ENCODE measurements at regions of chr10 and their contacts with region 1.

Region 1: GRCh38 chr10:112314822-112315474 is 31.7 kb downstream of the TECTB start:
- DNase-seq: peak; percentile 91
- H3K4me3 Mint-ChIP-seq: no peak overlapping the region
- H3K27ac Mint-ChIP-seq: no peak overlapping the region
- H3K4me1 Mint-ChIP-seq: no peaks in the 10 kb centered on the region
- H3K27me3 Mint-ChIP-seq: peaks cover 31% of the 10 kb centered on the region

Region 2: DNA sequence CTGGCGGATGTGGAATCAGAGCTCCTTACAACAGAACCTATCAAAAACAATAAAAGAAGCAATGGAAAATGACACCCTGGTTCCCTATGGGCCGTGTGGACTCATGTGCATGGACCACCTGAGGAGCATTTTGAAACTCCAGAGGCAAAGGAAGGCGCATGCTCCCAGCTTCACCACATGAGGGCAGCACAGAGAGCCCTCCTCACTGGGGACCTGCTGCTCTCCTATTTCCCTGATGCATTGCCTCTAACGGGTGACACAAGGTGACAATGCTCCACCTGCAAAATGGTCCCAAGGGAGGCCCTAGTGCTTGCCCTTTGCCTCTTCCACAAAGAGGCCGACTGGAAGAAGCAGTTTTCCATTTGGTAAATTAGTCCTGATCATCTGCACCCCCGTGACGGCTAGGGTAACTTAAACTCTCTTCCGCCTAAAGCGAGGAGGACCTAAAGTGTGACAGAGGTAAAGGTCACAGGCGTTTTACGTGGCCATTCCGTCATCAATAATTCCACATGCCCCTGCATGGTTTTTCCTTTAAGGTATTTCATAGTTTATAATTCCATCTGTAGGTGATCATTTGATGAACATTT is 199.1 kb before region 1 on chr10:
- intact Hi-C with region 1: loop called (anchors 1 kb)
- DNase-seq: peak; percentile 81
- H3K4me3 Mint-ChIP-seq: no peak overlapping the region
- H3K27ac Mint-ChIP-seq: no peak overlapping the region
- H3K4me1 Mint-ChIP-seq: no peaks in the 10 kb centered on the region
- H3K27me3 Mint-ChIP-seq: no peaks in the 10 kb centered on the region

Region 3: DNA sequence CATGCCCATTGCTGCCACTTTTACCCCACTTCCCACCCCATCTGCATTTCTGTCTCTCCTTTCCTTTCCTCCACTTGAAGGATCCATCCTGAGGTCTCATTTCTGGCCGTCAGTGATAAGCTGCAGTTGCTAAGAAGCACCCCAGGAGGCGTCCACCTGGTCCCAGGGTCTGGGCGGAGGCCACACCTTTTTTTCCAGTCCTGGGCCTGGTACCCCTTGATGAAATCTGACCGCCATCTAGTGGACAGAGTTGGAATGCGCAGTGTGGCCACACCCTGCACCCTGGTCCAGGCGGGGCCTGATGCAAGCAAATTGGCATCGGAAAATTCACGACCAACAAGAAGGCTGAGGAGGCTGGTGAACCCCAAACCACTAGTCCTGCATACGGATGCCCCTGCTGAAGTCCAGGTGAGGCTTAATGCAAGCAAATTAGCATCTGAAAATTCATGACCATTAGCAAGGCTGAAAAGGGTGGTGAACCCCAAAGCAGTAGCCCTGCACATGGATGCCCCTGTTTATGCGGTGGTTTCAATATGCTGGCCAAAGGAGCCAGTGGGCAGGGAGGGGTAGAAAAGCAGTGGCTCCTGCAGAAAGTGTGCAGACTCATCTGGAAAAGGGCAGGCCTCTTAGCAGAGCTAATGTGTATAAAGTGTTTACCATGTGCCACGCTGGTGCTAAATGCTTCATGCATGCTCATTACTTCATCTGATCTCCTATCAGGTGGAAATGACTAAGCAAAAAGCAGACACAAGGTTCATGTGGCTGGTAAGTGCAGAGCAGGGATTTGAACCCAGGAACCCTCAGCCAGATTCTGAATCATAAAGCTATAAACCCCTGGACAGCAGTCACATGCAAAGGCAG is 174.6 kb before region 1 on chr10:
- intact Hi-C with region 1: loop called (anchors 1 kb)
- DNase-seq: peak; percentile 92
- H3K4me3 Mint-ChIP-seq: no peak overlapping the region
- H3K27ac Mint-ChIP-seq: no peak overlapping the region
- H3K4me1 Mint-ChIP-seq: peaks cover 3% of the 10 kb centered on the region
- H3K27me3 Mint-ChIP-seq: peaks cover 4% of the 10 kb centered on the region

Region 4: DNA sequence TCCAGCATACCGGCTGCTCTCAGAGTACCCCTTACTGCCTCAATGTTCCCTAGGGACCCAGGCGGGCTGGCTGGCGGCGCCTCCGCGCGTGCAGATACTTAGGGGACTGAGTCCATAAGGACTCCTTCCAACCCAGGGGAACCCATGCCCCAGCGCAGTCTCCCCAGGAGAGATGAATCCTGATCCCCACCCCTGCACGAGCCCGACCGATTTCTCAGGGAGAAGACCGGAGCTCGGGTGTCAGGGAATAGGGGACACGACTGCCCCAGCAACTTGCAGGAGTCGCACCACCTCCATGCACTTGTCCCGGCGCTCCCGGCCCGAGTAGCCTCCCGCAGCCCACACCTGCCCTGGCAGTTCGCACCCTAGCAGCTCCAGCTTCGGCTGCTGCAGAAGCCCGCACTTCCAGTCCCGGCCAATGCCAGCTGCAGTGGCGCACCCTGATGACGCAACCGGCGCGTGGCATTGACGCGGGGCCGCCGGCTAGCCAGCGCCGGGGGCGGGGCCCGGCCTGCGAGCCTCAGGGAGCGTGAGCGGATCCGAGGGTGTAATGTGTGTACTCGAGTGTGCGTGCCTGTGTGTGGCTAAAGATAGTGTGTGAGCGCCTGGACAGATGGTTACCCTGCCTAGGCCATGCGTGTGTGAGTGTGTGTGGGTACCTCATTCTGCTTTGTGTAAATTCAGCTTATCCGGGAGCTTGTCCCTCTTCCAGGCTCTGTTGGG is 131.5 kb before region 1 on chr10 and contains the start of gene GPAM:
- intact Hi-C with region 1: loop called (anchors 5 kb)
- DNase-seq: peak; percentile 100
- H3K4me3 Mint-ChIP-seq: peak within 1 kb of the TSS; percentile 88
- H3K27ac Mint-ChIP-seq: peak within 1 kb of the TSS; percentile 88
- H3K4me1 Mint-ChIP-seq: peaks cover 26% of the 10 kb centered on the region
- H3K27me3 Mint-ChIP-seq: peaks cover 11% of the 10 kb centered on the region
- total RNA-seq, gene GPAM: 8.6 and 9.8 TPM in 2 replicates

Region 5: GRCh38 chr10:112203328-112204076 is 111.4 kb before region 1 on chr10:
- intact Hi-C with region 1: no loop called
- DNase-seq: no peak
- H3K4me3 Mint-ChIP-seq: no peak overlapping the region
- H3K27ac Mint-ChIP-seq: no peak overlapping the region
- H3K4me1 Mint-ChIP-seq: peaks cover 3% of the 10 kb centered on the region
- H3K27me3 Mint-ChIP-seq: peaks cover 5% of the 10 kb centered on the region

Region 6: GRCh38 chr10:112434988-112435619 is 120.2 kb after region 1 on chr10:
- intact Hi-C with region 1: loop called (anchors 2 kb)
- DNase-seq: no peak
- H3K4me3 Mint-ChIP-seq: no peak overlapping the region
- H3K27ac Mint-ChIP-seq: no peak overlapping the region
- H3K4me1 Mint-ChIP-seq: no peaks in the 10 kb centered on the region
- H3K27me3 Mint-ChIP-seq: no peaks in the 10 kb centered on the region

Region 7: DNA sequence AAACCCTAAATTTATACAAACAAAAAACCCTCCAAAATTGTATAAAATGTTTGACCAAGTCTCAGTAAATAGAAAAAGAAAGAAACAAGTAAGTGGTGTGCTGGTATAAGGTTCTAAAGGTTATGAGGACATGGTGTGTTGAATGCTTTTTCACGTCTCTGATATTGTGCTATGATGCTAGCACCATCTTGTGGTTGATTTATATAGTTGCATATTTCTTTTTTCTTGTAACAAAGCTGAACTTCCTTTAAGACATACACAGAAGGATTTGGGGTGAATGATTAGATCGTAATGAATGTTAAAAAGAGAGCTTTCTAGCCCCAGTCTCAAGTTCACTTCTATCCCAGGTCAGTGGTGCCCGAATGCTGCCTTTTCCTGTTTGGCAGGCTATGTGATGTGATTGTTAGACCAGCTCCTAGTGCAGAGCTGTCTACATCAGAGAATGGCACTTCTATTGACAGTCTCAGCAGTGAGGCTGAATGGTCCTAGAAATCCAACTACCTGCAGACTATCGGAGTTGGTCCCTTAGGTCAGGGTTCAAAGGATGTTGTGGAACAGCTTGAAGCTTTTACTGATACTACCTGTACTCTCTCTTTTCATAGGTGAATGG is 157.0 kb after region 1 on chr10:
- intact Hi-C with region 1: loop called (anchors 2 kb)
- DNase-seq: peak; percentile 60
- H3K4me3 Mint-ChIP-seq: no peak overlapping the region
- H3K27ac Mint-ChIP-seq: no peak overlapping the region
- H3K4me1 Mint-ChIP-seq: peaks cover 4% of the 10 kb centered on the region
- H3K27me3 Mint-ChIP-seq: no peaks in the 10 kb centered on the region